Caco-2 (cell line): ENCODE measurements at regions of chr3 and their contacts with region 1.

Region 1: GRCh38 chr3:86969500-86970189 is 21.3 kb downstream of the VGLL3 start:
- DNase-seq: peak in 1 of 2 experiments; percentile 36
- H3K4me3 ChIP-seq: no peak overlapping the region
- H3K4me3 Mint-ChIP-seq: no peak overlapping the region
- H3K27ac Mint-ChIP-seq: no peak overlapping the region
- H3K4me1 ChIP-seq: peaks cover 25% of the 10 kb centered on the region
- H3K4me1 Mint-ChIP-seq: peaks cover 21% of the 10 kb centered on the region
- H3K27me3 ChIP-seq: no peaks in the 10 kb centered on the region
- H3K27me3 Mint-ChIP-seq: no peaks in the 10 kb centered on the region
- CTCF ChIP-seq: peak; percentile 41 to 51

Region 2: DNA sequence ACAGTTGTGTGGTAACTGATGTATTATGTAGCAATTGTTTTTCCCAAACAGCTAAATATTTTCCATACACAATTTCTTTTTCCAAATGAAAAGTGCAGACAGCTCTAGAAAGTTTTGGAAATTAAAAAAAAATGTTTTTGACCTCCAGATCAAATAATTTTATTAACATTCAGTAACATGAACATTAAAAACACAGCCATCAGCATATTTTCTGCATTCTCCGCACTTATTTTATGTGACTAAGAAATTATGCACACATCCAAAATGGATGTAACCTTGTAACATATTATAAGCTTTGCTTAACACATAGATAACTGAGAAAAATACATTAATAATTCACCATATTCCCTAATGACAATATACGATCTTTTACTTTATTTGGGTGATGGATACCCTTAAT is 203.3 kb before region 1 on chr3:
- CTCF ChIA-PET with region 1: no interaction called
- POLR2A ChIA-PET with region 1: no interaction called
- intact Hi-C with region 1: no loop called
- DNase-seq: no peak
- H3K4me3 ChIP-seq: no peak overlapping the region
- H3K4me3 Mint-ChIP-seq: no peak overlapping the region
- H3K27ac Mint-ChIP-seq: no peak overlapping the region
- H3K4me1 ChIP-seq: no peaks in the 10 kb centered on the region
- H3K4me1 Mint-ChIP-seq: no peaks in the 10 kb centered on the region
- H3K27me3 ChIP-seq: no peaks in the 10 kb centered on the region
- H3K27me3 Mint-ChIP-seq: no peaks in the 10 kb centered on the region
- CTCF ChIP-seq: no peak

Region 3: DNA sequence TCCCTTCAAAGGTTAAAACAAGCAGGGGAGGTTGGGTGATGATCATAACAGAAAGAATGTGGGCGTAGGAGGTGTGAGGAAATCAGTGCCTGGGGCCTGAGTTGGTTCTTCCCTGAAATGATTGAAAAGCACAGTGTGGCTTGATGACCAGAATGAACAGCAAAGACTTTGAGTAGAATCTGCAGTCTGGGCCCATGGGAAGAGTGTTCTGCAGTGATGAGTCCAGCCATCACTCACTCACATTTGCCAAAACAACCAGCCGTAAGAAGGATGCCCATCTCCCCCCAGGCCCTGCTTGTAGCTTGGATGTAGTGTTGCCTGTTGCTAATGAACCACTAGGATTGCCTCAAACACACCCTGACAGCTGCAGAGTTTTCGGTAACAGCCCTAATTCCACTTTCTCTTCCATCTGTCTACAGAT is 46.6 kb before region 1 on chr3:
- CTCF ChIA-PET with region 1: no interaction called
- POLR2A ChIA-PET with region 1: no interaction called
- intact Hi-C with region 1: loop called (anchors 1 kb)
- DNase-seq: peak in 1 of 2 experiments; percentile 34
- H3K4me3 ChIP-seq: no peak overlapping the region
- H3K4me3 Mint-ChIP-seq: no peak overlapping the region
- H3K27ac Mint-ChIP-seq: no peak overlapping the region
- H3K4me1 ChIP-seq: no peaks in the 10 kb centered on the region
- H3K4me1 Mint-ChIP-seq: no peaks in the 10 kb centered on the region
- H3K27me3 ChIP-seq: no peaks in the 10 kb centered on the region
- H3K27me3 Mint-ChIP-seq: peaks cover 4% of the 10 kb centered on the region
- CTCF ChIP-seq: no peak

Region 4: GRCh38 chr3:86990734-86991481 is 21.3 kb after region 1 on chr3 and contains the start of gene VGLL3:
- CTCF ChIA-PET with region 1: no interaction called
- POLR2A ChIA-PET with region 1: no interaction called
- intact Hi-C with region 1: loop called (anchors 2 kb)
- DNase-seq: peak; percentile 84 to 86
- H3K4me3 ChIP-seq: peak within 1 kb of the TSS; percentile 59
- H3K4me3 Mint-ChIP-seq: peak within 1 kb of the TSS; percentile 89
- H3K27ac Mint-ChIP-seq: peak within 1 kb of the TSS; percentile 83
- H3K4me1 ChIP-seq: peaks cover 5% of the 10 kb centered on the region; the same call in 1 of the 2 replicates
- H3K4me1 Mint-ChIP-seq: peaks cover 19% of the 10 kb centered on the region
- H3K27me3 ChIP-seq: no peaks in the 10 kb centered on the region; the same call in 1 of the 2 replicates
- H3K27me3 Mint-ChIP-seq: no peaks in the 10 kb centered on the region
- CTCF ChIP-seq: peak in 1 of 2 experiments; percentile 27
- total RNA-seq, gene VGLL3: 8.2 and 10.4 TPM in 2 replicates